GM12878 (cell line): ENCODE measurements at regions of chr9 and their contacts with region 1.

Region 1: GRCh38 chr9:35732122-35732799 is at the starts of genes CREB3 and TLN1:
- DNase-seq: peak; percentile 91
- ATAC-seq: peak; percentile 86
- H3K4me3 ChIP-seq: peak within 1 kb of the TSS; percentile 93
- H3K27ac ChIP-seq: peak within 1 kb of the TSS; percentile 92
- H3K4me1 ChIP-seq: peaks cover 18% of the 10 kb centered on the region
- H3K27me3 ChIP-seq: no peaks in the 10 kb centered on the region
- CTCF ChIP-seq: peak in 2 of 3 experiments; percentile 20 to 49; a peak in 2 of 6 replicates
- EP300 ChIP-seq: peak in 1 of 2 experiments; percentile 12; a peak in 2 of 4 replicates
- POLR2A ChIP-seq: peak; percentile 84; the same call in 1 of the 2 replicates
- RAD21 ChIP-seq: no peak
- polyA plus RNA-seq, gene CREB3: 9.8 to 14.1 TPM
- polyA plus RNA-seq, gene TLN1: 11.6 to 13.2 TPM

Region 2: DNA sequence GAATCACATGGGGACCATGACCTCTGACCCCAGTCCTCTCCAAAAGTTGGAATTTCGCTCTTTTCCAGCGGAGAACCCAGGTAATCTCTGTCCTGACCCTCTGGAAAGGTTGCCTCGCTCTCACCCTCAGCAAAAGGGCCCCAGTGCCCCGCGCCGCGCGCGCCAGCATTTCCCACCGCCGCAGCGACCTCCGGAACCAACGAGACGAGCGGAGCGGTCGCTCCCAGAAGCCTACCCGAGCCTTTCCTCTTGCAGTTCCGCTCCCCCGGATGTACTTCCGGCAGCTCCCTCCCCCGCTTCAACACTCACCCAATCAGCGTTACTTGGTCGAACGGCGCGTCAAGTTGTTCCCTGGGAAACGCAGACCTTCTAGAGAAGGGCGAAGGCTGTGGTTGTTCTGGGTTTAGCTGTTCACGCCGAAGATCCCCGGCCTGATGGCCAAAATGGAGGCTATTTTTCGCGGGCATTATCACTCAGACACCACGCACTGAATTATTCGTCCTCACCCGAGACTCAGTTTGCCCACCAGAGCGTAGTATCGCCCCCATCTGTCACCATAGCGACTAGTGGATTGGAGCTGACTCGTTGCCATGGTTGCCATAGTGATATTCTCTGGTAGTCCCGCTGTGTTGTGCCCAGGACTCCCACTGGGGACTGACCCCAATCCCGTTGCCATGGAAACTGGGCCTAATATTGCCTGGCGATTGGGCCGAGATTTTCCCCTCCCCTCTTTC is 629.2 kb before region 1 on chr9 and contains the start of gene STOML2:
- CTCF ChIA-PET with region 1: no interaction called
- POLR2A ChIA-PET with region 1: no interaction called
- RAD21 ChIA-PET with region 1: no interaction called
- SMC1A ChIA-PET with region 1: no interaction called
- in situ Hi-C with region 1: loop called (anchors 10 kb)
- intact Hi-C with region 1: no loop called
- DNase-seq: peak; percentile 78
- ATAC-seq: peak; percentile 99
- H3K4me3 ChIP-seq: peak within 1 kb of the TSS; percentile 79
- H3K27ac ChIP-seq: peak within 1 kb of the TSS; percentile 88
- H3K4me1 ChIP-seq: peaks cover 5% of the 10 kb centered on the region
- H3K27me3 ChIP-seq: no peaks in the 10 kb centered on the region
- CTCF ChIP-seq: no peak
- EP300 ChIP-seq: peak in 1 of 2 experiments; percentile 73; a peak in 2 of 4 replicates
- POLR2A ChIP-seq: peak; percentile 88
- RAD21 ChIP-seq: no peak
- polyA plus RNA-seq, gene STOML2: 112 to 148 TPM

Region 3: DNA sequence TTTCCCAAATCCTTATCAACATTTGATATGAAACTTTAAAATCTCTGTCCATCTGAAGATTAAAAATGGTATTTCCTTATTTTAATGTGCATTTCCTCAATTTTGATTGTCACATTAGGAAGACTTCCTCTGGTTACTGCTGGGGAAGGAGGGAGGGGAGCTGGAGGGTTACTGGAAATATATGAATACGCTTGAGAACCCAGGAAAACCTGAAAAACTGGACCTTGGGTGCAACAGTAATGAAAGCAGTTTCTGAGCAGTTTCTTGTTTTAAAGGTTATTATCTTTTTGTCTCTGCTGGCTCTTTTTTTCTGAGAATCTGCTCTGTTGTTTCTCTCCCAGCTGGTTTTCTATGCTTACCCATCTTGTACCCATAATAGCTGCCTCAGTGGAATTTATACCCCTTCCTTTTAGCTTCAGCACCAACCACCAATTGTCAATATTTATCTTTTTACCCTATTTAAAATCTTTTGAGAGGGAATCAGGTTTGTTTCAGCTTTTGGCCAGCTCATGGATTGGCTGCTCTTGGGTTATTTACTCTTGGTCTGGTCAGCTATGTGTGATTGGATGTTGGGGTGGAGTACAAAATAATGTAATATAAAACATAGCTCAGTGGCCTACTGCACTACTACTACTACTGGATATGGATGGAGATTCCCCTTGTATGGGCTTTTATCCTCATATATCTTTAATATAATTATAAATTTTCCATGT is 503.0 kb before region 1 on chr9:
- CTCF ChIA-PET with region 1: no interaction called
- POLR2A ChIA-PET with region 1: no interaction called
- RAD21 ChIA-PET with region 1: no interaction called
- SMC1A ChIA-PET with region 1: no interaction called
- in situ Hi-C with region 1: no loop called
- intact Hi-C with region 1: no loop called
- DNase-seq: no peak
- ATAC-seq: no peak
- H3K4me3 ChIP-seq: no peak overlapping the region
- H3K27ac ChIP-seq: no peak overlapping the region
- H3K4me1 ChIP-seq: no peaks in the 10 kb centered on the region
- H3K27me3 ChIP-seq: no peaks in the 10 kb centered on the region
- CTCF ChIP-seq: no peak
- EP300 ChIP-seq: no peak
- POLR2A ChIP-seq: no peak
- RAD21 ChIP-seq: no peak

Region 4: GRCh38 chr9:35611230-35611797 is 120.9 kb before region 1 on chr9:
- CTCF ChIA-PET with region 1: interaction called, 20 read pairs
- POLR2A ChIA-PET with region 1: interaction called, 5 read pairs
- RAD21 ChIA-PET with region 1: interaction called, 5 read pairs
- SMC1A ChIA-PET with region 1: interaction called, 3 read pairs
- in situ Hi-C with region 1: loop called (anchors 5 kb)
- intact Hi-C with region 1: no loop called
- DNase-seq: no peak
- ATAC-seq: peak; percentile 93
- H3K4me3 ChIP-seq: no peak overlapping the region
- H3K27ac ChIP-seq: no peak overlapping the region
- H3K4me1 ChIP-seq: peaks cover under 1% of the 10 kb centered on the region; the same call in 1 of the 2 replicates
- H3K27me3 ChIP-seq: no peaks in the 10 kb centered on the region
- CTCF ChIP-seq: peak; percentile 73 to 80 (median 77)
- EP300 ChIP-seq: no peak
- POLR2A ChIP-seq: no peak
- RAD21 ChIP-seq: peak; percentile 39

Region 5: DNA sequence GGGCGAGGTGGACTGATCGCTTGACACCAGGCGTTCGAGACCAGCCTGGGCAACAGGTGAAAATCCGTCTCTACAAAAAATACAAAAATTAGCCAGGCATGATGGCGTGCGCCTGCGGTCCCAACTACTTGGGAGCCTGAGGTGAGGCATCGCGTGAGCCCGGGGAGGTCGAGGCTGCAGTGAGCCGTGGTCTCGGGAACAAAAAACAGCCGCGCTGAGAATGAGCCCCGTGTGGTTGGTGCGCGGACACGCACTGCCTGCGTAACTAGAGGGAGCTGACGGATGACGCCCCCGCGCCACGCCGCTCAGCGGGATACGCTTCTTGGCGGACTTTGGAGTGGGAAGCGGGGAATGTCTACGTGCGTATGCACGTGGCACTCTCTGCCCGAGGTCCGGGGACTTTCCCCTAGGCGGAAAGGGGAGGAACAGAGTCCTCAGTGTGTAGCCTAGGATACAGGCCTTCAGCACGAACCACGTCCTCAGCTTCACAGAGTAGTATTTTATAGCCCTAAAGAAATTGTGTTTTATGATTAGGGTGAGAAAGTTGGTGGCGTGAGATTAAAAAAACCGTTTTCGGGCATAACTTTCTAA is 74.6 kb before region 1 on chr9 and contains the start of gene RMRP:
- CTCF ChIA-PET with region 1: interaction called, 183 read pairs
- POLR2A ChIA-PET with region 1: interaction called, 163 read pairs
- RAD21 ChIA-PET with region 1: interaction called, 133 read pairs
- SMC1A ChIA-PET with region 1: interaction called, 145 read pairs
- in situ Hi-C with region 1: no loop called
- intact Hi-C with region 1: loop called (anchors 2 kb)
- DNase-seq: peak; percentile 96
- ATAC-seq: peak; percentile 93
- H3K4me3 ChIP-seq: peak within 1 kb of the TSS; percentile 85
- H3K27ac ChIP-seq: peak within 1 kb of the TSS; percentile 90
- H3K4me1 ChIP-seq: peaks cover 22% of the 10 kb centered on the region
- H3K27me3 ChIP-seq: no peaks in the 10 kb centered on the region
- CTCF ChIP-seq: no peak
- EP300 ChIP-seq: peak in 1 of 2 experiments; percentile 63; a peak in 3 of 4 replicates
- POLR2A ChIP-seq: no peak
- RAD21 ChIP-seq: no peak
- polyA plus RNA-seq, gene RMRP: not detected

Region 6: GRCh38 chr9:35696525-35697215 is 35.6 kb before region 1 on chr9:
- CTCF ChIA-PET with region 1: interaction called, 105 read pairs
- POLR2A ChIA-PET with region 1: interaction called, 13 read pairs
- RAD21 ChIA-PET with region 1: interaction called, 25 read pairs
- SMC1A ChIA-PET with region 1: interaction called, 38 read pairs
- in situ Hi-C with region 1: no loop called
- intact Hi-C with region 1: loop called (anchors 1 kb)
- DNase-seq: no peak
- ATAC-seq: peak; percentile 99
- H3K4me3 ChIP-seq: no peak overlapping the region
- H3K27ac ChIP-seq: no peak overlapping the region
- H3K4me1 ChIP-seq: no peaks in the 10 kb centered on the region
- H3K27me3 ChIP-seq: no peaks in the 10 kb centered on the region
- CTCF ChIP-seq: peak; percentile 78 to 98 (median 97)
- EP300 ChIP-seq: no peak
- POLR2A ChIP-seq: no peak
- RAD21 ChIP-seq: peak; percentile 61

Region 7: GRCh38 chr9:35756275-35757225 is 24.3 kb after region 1 on chr9:
- CTCF ChIA-PET with region 1: interaction called, 25 read pairs
- POLR2A ChIA-PET with region 1: interaction called, 6 read pairs
- RAD21 ChIA-PET with region 1: interaction called, 6 read pairs
- SMC1A ChIA-PET with region 1: interaction called, 19 read pairs
- in situ Hi-C with region 1: no loop called
- intact Hi-C with region 1: loop called (anchors 2 kb)
- DNase-seq: no peak
- ATAC-seq: peak; percentile 86
- H3K4me3 ChIP-seq: peak overlapping the region; percentile 87
- H3K27ac ChIP-seq: peak overlapping the region; percentile 98
- H3K4me1 ChIP-seq: peaks cover 22% of the 10 kb centered on the region
- H3K27me3 ChIP-seq: no peaks in the 10 kb centered on the region
- CTCF ChIP-seq: peak; percentile 76 to 94 (median 82)
- EP300 ChIP-seq: no peak
- POLR2A ChIP-seq: no peak; the same call in none of the 2 replicates
- RAD21 ChIP-seq: peak; percentile 59

Region 8: GRCh38 chr9:35829084-35829763 is 97.0 kb after region 1 on chr9 and contains the start of gene TMEM8B:
- CTCF ChIA-PET with region 1: interaction called, 19 read pairs
- POLR2A ChIA-PET with region 1: no interaction called
- RAD21 ChIA-PET with region 1: interaction called, 14 read pairs
- SMC1A ChIA-PET with region 1: interaction called, 10 read pairs
- in situ Hi-C with region 1: no loop called
- intact Hi-C with region 1: loop called (anchors 1 kb)
- DNase-seq: no peak
- ATAC-seq: peak; percentile 90
- H3K4me3 ChIP-seq: peak within 1 kb of the TSS; percentile 78
- H3K27ac ChIP-seq: peak within 1 kb of the TSS; percentile 45; the same call in 1 of the 2 replicates
- H3K4me1 ChIP-seq: peaks cover 15% of the 10 kb centered on the region
- H3K27me3 ChIP-seq: no peaks in the 10 kb centered on the region
- CTCF ChIP-seq: no peak
- EP300 ChIP-seq: no peak
- POLR2A ChIP-seq: peak; percentile 76
- RAD21 ChIP-seq: no peak
- polyA plus RNA-seq, gene TMEM8B: 0.19 to 0.71 TPM

Region 9: GRCh38 chr9:36798350-36799065 is 1066.2 kb after region 1 on chr9:
- CTCF ChIA-PET with region 1: no interaction called
- POLR2A ChIA-PET with region 1: no interaction called
- RAD21 ChIA-PET with region 1: no interaction called
- SMC1A ChIA-PET with region 1: no interaction called
- in situ Hi-C with region 1: no loop called
- intact Hi-C with region 1: no loop called
- DNase-seq: no peak
- ATAC-seq: peak; percentile 98
- H3K4me3 ChIP-seq: no peak overlapping the region
- H3K27ac ChIP-seq: no peak overlapping the region
- H3K4me1 ChIP-seq: no peaks in the 10 kb centered on the region
- H3K27me3 ChIP-seq: no peaks in the 10 kb centered on the region; a peak in 1 of 4 replicates
- CTCF ChIP-seq: peak in 2 of 3 experiments; percentile 25 to 66; a peak in 3 of 6 replicates
- EP300 ChIP-seq: no peak
- POLR2A ChIP-seq: no peak
- RAD21 ChIP-seq: peak; percentile 71